Esophagus squamous epithelium (tissue), 5 donors: ENCODE measurements at regions of chr4 and their contacts with region 1.

Region 1: GRCh38 chr4:54322818-54323417 is 93.8 kb downstream of the PDGFRA start:
- DNase-seq: no peak
- H3K4me3 ChIP-seq: no peak overlapping the region
- H3K27ac ChIP-seq: no peak overlapping the region
- H3K4me1 ChIP-seq: peaks cover 0 to 3% (median 0%) of the 10 kb centered on the region in 3 donors
- H3K27me3 ChIP-seq: no peaks in the 10 kb centered on the region
- CTCF ChIP-seq: peak in 5 of 6 experiments; percentile 56 to 76 (median 67)
- POLR2A ChIP-seq: no peak

Region 2: DNA sequence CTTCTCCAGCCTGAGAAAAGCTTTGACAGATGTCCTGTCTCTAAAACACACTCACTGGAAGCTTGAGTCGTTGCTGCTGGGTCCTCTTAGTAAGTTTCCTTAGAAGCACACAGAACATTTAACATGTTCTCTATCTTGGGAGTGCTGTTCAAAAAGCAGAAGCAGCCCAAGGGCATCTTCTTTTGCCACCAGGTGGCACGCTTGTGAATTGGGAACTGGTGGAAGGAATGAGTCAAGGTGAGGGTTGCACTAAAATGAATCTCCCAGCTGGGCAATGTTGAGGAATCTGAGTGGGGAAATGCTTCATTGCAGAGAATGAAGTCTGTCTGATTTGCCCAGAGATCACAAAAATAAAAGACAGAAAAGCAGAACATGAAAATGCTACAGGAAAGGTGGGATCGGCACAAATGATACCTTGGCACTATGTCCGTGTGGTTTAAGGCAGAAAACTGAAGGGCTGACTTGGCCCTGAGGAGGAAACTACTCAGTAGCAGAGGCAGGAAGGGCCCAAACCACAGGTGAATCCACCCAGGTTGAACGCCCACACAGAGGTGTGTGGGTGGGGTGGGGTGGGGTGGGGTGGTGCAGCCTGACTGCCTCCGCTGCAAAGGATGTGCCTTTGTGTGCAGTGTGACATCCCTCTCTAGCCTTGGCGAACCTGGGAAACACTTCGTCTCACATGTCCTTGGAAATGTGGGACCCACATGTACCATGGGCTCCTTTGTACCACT is 360.9 kb after region 1 on chr4:
- intact Hi-C with region 1: no loop called
- DNase-seq: no peak
- H3K4me3 ChIP-seq: no peak overlapping the region
- H3K27ac ChIP-seq: no peak overlapping the region
- H3K4me1 ChIP-seq: no peaks in the 10 kb centered on the region
- H3K27me3 ChIP-seq: no peaks in the 10 kb centered on the region
- CTCF ChIP-seq: peak in 5 of 6 experiments; percentile 32 to 70 (median 48)
- POLR2A ChIP-seq: no peak

Region 3: GRCh38 chr4:54959652-54960116 is 636.8 kb after region 1 on chr4:
- intact Hi-C with region 1: loop called (anchors 10 kb)
- DNase-seq: no peak
- H3K4me3 ChIP-seq: no peak overlapping the region
- H3K27ac ChIP-seq: no peak overlapping the region
- H3K4me1 ChIP-seq: no peaks in the 10 kb centered on the region
- H3K27me3 ChIP-seq: no peaks in the 10 kb centered on the region
- CTCF ChIP-seq: no peak
- POLR2A ChIP-seq: no peak